ENCODE measurements at regions of chr17 and their contacts with region 1.

Region 1: GRCh38 chr17:32693194-32693897 is 183.6 kb downstream of the MYO1D start:
- DNase-seq: no peak
- ATAC-seq: no peak
- H3K4me3 ChIP-seq: no peak overlapping the region
- H3K27ac ChIP-seq: no peak overlapping the region
- H3K4me1 ChIP-seq: no peaks in the 10 kb centered on the region
- H3K27me3 ChIP-seq: peaks cover 2% of the 10 kb centered on the region; the same call in 1 of the 2 replicates
- CTCF ChIP-seq: no peak

Region 2: DNA sequence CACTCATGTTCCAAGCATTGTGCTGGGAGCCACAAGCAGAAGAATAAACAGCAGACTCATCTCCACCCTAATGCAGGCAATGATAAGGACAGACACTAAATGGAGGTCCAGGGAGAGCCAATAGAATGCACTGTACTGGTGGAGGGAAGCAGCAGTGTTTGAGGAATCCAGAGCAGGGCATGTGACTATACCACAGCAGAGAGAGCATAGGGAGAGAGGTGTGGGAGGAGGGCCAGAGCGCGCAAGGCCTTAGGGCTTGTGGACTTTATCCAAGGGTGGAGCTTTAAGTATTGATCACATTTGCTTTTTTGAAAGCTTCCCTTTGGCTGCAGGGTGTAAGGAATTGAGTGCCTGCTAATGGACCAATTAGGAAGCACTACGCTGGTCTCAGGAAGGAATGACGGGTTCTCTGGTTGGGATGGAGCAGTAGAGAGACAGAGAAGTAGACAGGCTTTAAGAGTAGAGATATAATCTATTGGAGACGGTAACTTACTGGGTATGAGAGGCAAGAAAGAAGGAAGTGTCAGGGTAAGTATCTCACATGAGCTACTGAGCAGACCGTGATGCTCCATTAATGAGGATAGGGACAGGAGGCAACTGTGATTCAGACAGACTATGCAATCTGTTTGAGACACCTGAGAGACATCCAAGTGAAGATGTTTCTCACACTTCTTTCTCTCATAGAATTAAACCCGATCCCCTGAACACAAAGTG is 101.3 kb after region 1 on chr17:
- CTCF ChIA-PET with region 1: interaction called, 3 read pairs
- POLR2A ChIA-PET with region 1: interaction called, 11 read pairs
- in situ Hi-C with region 1: no loop called
- intact Hi-C with region 1: no loop called
- DNase-seq: no peak
- ATAC-seq: no peak
- H3K4me3 ChIP-seq: no peak overlapping the region
- H3K27ac ChIP-seq: no peak overlapping the region
- H3K4me1 ChIP-seq: no peaks in the 10 kb centered on the region
- H3K27me3 ChIP-seq: no peaks in the 10 kb centered on the region; the same call in 1 of the 2 replicates
- CTCF ChIP-seq: no peak

Measured in Panc1 (cell line).